ENCODE measurements at regions of chr12 and their contacts with region 1.

Region 1: GRCh38 chr12:76083904-76084862 is at the start of gene NAP1L1:
- DNase-seq: peak; percentile 99
- ATAC-seq: peak; percentile 98
- H3K4me3 ChIP-seq: peak within 1 kb of the TSS; percentile 84 to 85
- H3K27ac ChIP-seq: peak within 1 kb of the TSS; percentile 79 to 97
- H3K4me1 ChIP-seq: no peaks in the 10 kb centered on the region
- H3K27me3 ChIP-seq: no peaks in the 10 kb centered on the region
- total RNA-seq, gene NAP1L1: 312 to 371 TPM

Region 2: DNA sequence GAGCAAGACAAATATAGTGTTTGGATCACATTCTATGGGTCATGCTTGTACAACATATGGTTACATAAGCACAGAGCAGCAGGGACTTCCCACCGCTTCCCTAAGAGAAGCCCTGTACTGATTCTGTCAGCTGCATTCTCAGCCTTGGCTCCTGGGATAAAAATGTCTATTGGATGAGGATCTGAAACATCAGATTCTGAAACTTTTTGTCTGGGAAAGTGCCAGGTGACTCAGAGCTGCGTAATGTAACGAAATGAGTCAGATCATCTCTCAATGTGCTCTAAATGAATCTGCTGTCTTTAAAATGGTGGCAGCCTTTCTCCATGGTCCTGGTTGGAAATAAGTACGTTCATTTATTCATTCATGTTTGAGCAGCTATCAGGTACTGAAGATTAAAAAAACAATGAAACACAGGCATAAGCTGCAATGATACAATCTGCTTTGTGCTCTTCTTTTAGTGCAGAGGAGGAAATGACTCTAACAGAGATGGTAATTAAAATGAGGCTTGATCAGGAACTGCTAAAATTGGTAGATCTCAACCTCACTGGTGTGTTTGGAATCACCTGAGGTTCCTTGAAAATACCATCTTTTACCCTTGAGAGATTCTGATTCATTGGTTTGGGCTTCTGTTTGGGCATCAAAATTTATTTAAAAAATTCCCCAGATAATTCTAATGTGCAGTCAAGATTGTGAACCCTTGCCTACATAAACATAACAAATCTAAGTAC is 99.4 kb after region 1 on chr12:
- intact Hi-C with region 1: no loop called
- DNase-seq: peak in 1 of 2 donors; percentile 55
- ATAC-seq: peak; percentile 38
- H3K4me3 ChIP-seq: no peak overlapping the region
- H3K27ac ChIP-seq: no peak overlapping the region
- H3K4me1 ChIP-seq: no peaks in the 10 kb centered on the region
- H3K27me3 ChIP-seq: no peaks in the 10 kb centered on the region

Region 3: DNA sequence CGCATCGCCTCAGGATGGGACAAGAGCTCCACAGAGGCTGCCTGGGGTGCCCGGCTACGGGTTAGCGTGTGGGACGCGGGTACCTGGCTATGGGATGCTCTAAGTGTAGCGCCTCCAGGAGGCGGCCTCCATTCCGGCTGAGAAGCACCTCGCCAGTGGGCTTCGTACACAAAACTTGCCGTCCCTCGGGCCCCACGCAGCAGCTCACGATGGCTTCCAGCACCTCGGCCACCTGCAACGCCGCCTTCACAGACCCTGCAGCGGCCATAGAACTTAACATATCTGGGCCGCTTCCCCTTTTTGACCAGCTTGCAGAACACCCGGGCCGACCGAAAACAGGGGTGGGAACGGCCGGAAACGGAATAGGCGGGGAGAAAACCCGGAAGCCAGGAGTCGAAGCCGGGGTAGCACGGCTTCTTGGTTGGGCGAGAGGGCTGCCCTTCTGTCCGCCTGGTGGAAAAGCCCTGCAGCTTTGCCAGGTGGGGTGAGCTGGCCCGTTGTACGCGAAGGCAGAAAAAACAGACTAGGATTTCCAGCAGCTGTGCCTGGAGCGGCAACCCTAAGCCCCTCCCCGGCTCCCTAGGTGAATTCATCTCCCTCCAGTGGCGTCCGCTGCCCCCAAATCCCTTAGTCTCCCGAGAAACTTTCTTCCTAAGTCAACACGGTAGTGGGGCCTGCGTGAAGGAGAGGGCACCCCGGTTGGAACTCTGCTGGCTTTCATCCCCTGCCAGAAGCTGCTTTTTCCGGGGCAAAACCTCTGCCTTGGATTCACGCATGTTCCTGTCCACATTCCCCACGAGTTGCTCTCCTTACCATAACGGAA is 264.1 kb after region 1 on chr12 and contains the start of gene BBS10:
- intact Hi-C with region 1: loop called (anchors 10 kb)
- DNase-seq: peak; percentile 96
- ATAC-seq: peak; percentile 96
- H3K4me3 ChIP-seq: peak within 1 kb of the TSS; percentile 72 to 83
- H3K27ac ChIP-seq: peak within 1 kb of the TSS in 1 of 2 donors; percentile 93
- H3K4me1 ChIP-seq: peaks cover 0 to 3% of the 10 kb centered on the region in 2 donors
- H3K27me3 ChIP-seq: no peaks in the 10 kb centered on the region
- total RNA-seq, gene BBS10: 6.7 to 8.9 TPM

Region 4: GRCh38 chr12:76455582-76456345 is 371.6 kb after region 1 on chr12:
- intact Hi-C with region 1: loop called in 1 of 2 experiments (anchors 10 kb)
- DNase-seq: no peak
- ATAC-seq: peak; percentile 73
- H3K4me3 ChIP-seq: no peak overlapping the region
- H3K27ac ChIP-seq: no peak overlapping the region
- H3K4me1 ChIP-seq: no peaks in the 10 kb centered on the region
- H3K27me3 ChIP-seq: no peaks in the 10 kb centered on the region

Region 5: GRCh38 chr12:76559400-76560085 is 475.4 kb after region 1 on chr12 and contains the start of gene OSBPL8:
- intact Hi-C with region 1: loop called in 1 of 2 experiments (anchors 10 kb)
- DNase-seq: peak; percentile 97 to 99
- ATAC-seq: peak; percentile 99
- H3K4me3 ChIP-seq: peak within 1 kb of the TSS; percentile 68 to 94
- H3K27ac ChIP-seq: peak within 1 kb of the TSS; percentile 8 to 84
- H3K4me1 ChIP-seq: no peaks in the 10 kb centered on the region
- H3K27me3 ChIP-seq: no peaks in the 10 kb centered on the region
- total RNA-seq, gene OSBPL8: 77.8 to 100 TPM

Region 6: DNA sequence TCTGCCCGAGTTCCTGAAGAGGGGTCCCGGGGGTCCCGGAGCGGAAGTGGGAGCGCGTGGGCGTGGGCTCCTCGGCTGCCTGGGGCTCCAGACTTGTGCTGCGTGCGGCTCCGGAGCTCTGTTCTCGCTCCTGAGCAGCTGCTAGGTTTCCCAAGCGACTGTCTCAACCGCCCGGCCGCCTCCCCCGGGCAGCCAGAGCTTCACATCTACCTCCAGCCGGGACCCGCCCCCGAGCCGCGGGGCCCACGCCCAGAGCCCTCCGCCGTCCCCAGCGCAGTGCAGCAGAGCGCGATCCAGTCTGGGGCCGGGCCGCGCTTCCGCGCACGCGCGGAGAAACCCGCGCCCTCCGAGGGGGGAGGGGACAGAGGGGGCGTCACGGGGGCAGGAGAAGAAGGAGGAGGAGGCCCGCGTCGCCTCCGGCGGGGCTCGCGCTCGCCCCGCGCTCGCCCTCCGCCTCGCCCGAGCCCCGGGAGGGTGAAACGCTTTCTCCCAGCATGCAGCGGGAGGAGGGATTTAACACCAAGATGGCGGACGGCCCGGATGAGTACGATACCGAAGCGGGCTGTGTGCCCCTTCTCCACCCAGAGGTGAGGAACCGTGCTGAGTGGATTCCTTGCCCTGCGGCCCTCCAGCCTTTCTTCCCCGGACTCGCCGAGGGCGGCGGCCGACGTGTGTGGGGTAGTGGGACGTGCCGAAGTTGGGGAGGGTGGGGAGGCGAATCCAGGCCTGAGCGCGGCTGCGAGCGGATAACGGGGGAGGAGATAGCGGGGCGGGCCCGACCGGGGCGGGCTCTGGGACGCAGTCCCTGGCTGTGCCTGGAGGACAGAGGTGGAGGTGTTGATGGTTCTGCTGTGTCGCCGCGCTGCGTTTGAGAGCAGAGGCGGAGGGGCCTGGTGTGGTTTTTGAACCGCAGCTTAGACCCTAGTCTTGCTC is 679.8 kb after region 1 on chr12 and contains the start of gene ZDHHC17:
- intact Hi-C with region 1: loop called in 1 of 2 experiments (anchors 10 kb)
- DNase-seq: peak; percentile 94 to 96
- ATAC-seq: peak; percentile 97
- H3K4me3 ChIP-seq: peak within 1 kb of the TSS; percentile 68 to 76
- H3K27ac ChIP-seq: peak within 1 kb of the TSS; percentile 62 to 92
- H3K4me1 ChIP-seq: peaks cover 0 to 2% of the 10 kb centered on the region in 2 donors
- H3K27me3 ChIP-seq: no peaks in the 10 kb centered on the region
- total RNA-seq, gene ZDHHC17: 47.1 to 52.2 TPM